Right ventricle myocardium superior (tissue), 1 donor: ENCODE measurements at regions of chr11 and their contacts with region 1.

Region 1: GRCh38 chr11:3091791-3092602 is 34.8 kb upstream of the CARS1 start:
- DNase-seq: peak; percentile 79
- ATAC-seq: peak; percentile 80

Region 2: GRCh38 chr11:3006505-3007183 is 85.4 kb before region 1 on chr11:
- intact Hi-C with region 1: no loop called
- DNase-seq: no peak
- ATAC-seq: no peak

Region 3: DNA sequence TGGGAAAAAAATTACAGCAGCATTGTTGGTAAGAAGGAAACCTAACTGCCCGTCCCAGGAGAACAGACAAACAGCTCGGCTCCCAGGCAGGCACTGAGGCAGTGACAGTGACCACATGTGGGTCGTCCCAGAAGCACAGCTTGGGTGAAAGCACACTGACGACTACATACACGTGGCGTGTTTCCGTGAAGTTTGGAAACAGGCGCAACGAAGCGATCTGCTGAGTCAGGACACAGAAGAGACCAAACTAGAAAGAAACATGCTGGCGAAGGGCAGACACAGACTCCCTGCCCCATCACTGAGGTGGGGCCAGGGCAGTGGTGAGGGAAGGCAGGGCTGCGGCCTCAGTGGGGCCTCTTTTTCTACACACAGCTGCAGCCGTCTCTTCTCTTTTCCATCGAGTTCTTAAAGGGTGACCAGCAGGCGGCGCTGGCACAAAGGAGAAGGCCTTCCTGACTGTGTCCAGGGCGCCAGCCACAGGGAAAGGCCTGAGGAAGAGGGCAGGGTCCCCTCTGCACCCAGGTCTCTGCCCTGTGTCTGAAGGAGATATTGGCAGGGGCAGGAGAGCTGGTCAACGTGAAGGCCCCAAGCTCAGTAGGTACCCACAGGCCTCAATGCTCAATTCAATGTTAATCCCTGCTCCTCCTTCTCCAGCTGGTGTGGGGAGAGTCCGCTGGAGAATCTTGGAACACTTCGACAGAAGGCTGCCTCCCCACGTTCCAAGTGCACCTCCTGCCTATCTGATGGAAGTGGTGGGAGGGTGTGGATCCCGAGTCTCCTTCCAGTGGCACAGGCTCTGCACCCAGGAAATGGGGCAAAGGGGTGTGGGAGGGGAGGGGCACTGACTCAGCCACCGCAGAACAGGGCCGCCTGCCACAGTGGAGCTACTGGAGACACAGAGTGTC is 54.7 kb before region 1 on chr11:
- intact Hi-C with region 1: loop called (anchors 1 kb)
- DNase-seq: peak; percentile 92
- ATAC-seq: peak; percentile 85

Region 4: DNA sequence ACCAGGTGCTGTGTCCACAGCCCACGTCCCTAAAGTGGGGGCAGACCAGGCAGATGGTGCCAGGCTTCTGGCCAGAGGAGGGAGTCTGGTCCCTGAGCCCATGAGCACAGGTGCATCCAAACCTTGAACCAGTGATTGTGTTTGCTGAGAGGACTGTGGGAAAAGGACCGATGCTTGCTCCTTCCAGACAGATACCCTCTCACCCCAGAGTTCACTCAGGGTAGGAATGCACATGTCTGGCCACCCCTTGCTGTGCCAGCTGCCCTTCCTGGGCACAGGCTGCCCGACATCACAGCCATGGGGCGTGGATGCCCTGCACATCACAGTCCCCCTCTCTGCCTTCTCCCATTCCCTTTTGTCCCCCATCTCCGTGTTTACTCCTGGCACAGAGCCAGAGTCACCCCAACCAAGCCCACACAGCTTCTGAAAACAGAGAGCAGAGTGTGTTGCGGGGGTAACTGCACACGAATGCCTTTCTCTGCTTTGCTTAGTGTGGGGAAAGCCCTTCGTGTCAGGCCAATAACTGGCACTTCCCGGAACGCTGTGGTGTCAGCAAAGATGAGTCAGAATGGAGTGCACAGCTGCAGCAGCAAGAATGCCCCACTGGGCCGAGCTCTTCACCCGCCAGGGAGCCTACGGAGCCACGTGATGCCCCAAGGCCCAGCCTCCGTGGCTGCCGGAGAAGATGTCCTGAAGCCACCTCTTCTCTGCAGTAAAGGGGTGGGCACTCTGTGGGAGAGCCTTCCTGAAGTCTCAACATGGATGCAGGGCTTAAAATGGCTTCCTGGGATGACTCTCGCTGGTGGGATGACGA is 42.4 kb before region 1 on chr11:
- intact Hi-C with region 1: loop called (anchors 5 kb)
- DNase-seq: peak; percentile 80
- ATAC-seq: peak; percentile 75

Region 5: GRCh38 chr11:3153291-3153861 is 61.4 kb after region 1 on chr11:
- intact Hi-C with region 1: no loop called
- DNase-seq: peak; percentile 81
- ATAC-seq: peak; percentile 71